ENCODE measurements at regions of chr5 and their contacts with region 1.

Region 1: DNA sequence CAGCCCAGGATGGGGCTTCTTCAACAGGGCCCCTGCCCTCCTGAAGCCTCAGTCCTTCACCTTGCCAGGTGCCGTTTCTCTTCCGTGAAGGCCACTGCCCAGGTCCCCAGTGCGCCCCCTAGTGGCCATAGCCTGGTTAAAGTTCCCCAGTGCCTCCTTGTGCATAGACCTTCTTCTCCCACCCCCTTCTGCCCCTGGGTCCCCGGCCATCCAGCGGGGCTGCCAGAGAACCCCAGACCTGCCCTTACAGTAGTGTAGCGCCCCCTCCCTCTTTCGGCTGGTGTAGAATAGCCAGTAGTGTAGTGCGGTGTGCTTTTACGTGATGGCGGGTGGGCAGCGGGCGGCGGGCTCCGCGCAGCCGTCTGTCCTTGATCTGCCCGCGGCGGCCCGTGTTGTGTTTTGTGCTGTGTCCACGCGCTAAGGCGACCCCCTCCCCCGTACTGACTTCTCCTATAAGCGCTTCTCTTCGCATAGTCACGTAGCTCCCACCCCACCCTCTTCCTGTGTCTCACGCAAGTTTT is 23.6 kb downstream of the PCDHGC5 start:
- DNase-seq: peak; percentile 96
- H3K4me3 ChIP-seq: peak overlapping the region; percentile 54 to 63
- H3K27ac ChIP-seq: peak overlapping the region; percentile 67 to 88
- H3K4me1 ChIP-seq: peaks cover 20% of the 10 kb centered on the region
- H3K27me3 ChIP-seq: no peaks in the 10 kb centered on the region
- CTCF ChIP-seq: peak; percentile 80 to 96 (median 82)
- POLR2A ChIP-seq: no peak

Region 2: DNA sequence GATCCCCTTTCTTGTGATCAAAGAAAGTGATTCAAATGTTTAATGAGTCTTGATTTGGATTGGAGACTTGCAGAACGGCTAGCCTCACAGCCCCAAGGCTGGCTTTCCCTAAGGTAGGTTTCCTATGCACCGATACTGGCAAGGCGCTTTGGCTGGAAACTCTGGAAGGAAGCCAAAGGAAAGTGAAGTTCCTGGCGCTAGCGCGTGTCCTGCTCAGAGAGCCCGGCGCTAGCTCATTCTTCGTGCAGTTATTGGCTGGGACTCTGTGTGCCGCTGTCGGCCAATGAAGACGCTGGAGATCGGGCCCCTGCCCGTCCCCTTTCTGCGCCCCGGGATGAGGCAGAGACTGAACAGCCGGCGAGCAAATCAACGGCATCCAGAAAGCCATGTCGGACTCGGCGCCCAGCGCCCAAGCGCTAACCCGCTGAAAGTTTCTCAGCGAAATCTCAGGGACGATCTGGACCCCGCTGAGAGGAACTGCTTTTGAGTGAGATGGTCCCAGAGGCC is 36.8 kb before region 1 on chr5 and contains the start of gene PCDHGC3:
- intact Hi-C with region 1: loop called (anchors 5 kb)
- DNase-seq: peak; percentile 95
- H3K4me3 ChIP-seq: peak within 1 kb of the TSS; percentile 50 to 65
- H3K27ac ChIP-seq: peak within 1 kb of the TSS; percentile 77 to 84
- H3K4me1 ChIP-seq: peaks cover 14% of the 10 kb centered on the region
- H3K27me3 ChIP-seq: no peaks in the 10 kb centered on the region
- CTCF ChIP-seq: peak; percentile 6 to 35 (median 25)
- POLR2A ChIP-seq: no peak
- total RNA-seq, gene PCDHGC3: 14.5 to 29.4 TPM

Region 3: DNA sequence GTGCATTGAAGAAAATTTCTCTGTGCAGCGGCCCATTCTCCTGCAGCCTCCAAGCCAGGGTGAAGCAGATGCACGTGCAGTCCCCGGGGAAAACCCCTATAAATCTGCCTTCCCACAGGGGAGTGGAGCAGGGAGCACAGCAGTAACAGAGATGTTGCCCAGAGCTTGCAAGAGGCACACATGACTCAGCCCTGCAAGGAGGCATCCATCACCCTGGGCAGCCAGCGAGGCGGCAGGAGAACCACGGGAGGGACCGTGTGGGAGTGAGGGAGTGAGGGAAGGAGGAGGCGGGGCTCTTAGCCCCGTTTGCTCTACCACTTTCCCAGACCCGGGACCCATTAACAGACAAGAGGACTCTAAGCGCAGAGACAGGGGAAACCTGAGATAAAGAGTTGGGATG is 265.8 kb after region 1 on chr5:
- intact Hi-C with region 1: no loop called
- DNase-seq: peak; percentile 44
- H3K4me3 ChIP-seq: no peak overlapping the region
- H3K27ac ChIP-seq: no peak overlapping the region
- H3K4me1 ChIP-seq: no peaks in the 10 kb centered on the region
- H3K27me3 ChIP-seq: no peaks in the 10 kb centered on the region
- CTCF ChIP-seq: no peak
- POLR2A ChIP-seq: no peak

Measured in testis (tissue), 5 donors.